ENCODE measurements at regions of chr12 and their contacts with region 1.

Region 1: DNA sequence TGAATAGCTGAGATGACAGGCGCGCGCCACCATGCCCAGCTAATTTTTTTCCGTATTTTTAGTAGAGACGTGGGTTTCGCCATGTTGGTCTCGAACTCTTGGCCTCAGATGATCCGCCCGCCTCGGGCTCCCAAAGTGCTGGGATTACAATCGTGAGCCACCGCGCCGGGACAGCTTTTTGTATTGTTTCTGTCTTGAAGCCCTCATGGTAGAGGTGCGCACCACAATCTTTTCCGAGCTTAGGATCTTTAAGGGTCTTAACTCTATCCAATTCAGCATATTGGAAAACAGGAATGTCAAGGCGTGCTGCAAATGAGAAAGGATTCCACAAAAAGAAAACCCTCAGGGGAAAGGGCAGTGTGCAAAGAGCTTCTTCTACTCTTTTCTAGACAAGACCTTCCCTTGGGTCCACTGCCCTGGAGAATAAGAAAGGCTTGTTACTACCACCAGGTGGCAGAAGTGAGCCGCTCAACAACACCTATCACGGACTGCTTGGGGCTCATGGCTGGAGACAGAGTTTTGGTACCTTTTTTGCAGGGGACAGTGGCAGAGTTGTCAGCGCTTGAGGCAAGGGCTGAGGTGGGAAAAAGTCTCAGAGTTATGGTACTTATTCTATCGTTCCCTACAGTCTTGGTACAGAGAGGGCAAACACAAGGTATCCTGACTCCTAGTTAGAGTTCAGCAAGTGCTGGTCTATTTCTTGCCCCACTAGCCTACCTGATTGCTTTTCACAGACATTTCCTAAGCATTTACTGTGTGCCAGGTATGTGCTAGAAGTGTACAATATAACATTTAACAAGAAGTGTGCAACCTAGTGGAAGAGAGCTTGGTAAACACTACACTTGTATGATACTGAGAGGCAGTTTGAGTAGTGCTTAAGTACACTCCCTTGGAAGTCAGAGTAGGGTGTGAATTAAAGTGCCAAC is 16.4 kb upstream of the SP7 start:
- DNase-seq: peak; percentile 84

Region 2: GRCh38 chr12:53324779-53325510 is 27.6 kb before region 1 on chr12:
- intact Hi-C with region 1: no loop called
- DNase-seq: peak; percentile 95

Region 3: DNA sequence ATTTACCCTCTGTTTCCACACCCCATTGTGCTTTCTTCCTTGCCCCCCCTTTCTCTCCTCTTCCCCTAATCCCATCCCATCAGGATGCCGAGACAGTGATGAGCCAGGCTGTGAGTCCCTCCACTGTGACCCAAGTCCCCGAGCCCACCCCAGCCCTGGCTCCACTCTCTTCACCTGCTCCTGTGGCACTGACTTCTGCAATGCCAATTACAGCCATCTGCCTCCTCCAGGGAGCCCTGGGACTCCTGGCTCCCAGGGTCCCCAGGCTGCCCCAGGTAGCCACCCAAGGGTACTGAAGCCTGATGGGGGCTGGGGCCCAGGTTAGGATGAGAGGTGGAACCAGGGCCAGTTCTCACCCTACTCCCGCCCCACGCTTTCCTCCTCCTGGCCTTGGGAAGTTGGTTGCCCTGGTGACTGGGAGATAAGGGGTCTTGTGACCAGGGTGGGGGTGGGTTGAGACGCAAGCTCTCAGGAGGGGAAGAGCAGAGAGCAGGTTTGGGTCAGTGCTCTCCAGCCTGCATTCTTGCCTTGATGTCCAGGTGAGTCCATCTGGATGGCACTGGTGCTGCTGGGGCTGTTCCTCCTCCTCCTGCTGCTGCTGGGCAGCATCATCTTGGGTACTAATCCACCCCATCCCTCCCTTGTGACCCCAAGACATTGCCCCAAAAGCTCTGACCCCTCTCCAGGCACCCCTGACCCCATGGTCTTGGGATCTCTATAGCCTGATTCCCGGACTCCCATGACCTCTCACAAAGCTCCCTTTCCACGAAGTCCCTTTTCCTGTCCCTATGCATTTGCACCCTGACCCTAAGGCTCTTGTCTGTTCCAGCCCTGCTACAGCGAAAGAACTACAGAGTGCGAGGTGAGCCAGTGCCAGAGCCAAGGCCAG is 72.3 kb after region 1 on chr12:
- intact Hi-C with region 1: loop called (anchors 1 kb)
- DNase-seq: no peak

Region 4: GRCh38 chr12:53508534-53509199 is 156.1 kb after region 1 on chr12:
- intact Hi-C with region 1: loop called (anchors 2 kb)
- DNase-seq: peak; percentile 93

Measured in cardiac septum (tissue), 1 donor.